Prostate gland (tissue), 2 donors: ENCODE measurements at regions of chr22 and their contacts with region 1.

Region 1: GRCh38 chr22:42662114-42663021 is 13.2 kb upstream of the CYB5R3 start:
- DNase-seq: peak; percentile 79
- H3K4me3 ChIP-seq: peak overlapping the region; percentile 34 to 42
- H3K27ac ChIP-seq: peak overlapping the region; percentile 52 to 71
- H3K4me1 ChIP-seq: no peaks in the 10 kb centered on the region
- H3K27me3 ChIP-seq: no peaks in the 10 kb centered on the region
- CTCF ChIP-seq: peak; percentile 80 to 91 (median 84)
- POLR2A ChIP-seq: no peak

Region 2: GRCh38 chr22:42562238-42562665 is 100.1 kb before region 1 on chr22:
- intact Hi-C with region 1: no loop called
- DNase-seq: no peak
- H3K4me3 ChIP-seq: no peak overlapping the region
- H3K27ac ChIP-seq: no peak overlapping the region
- H3K4me1 ChIP-seq: no peaks in the 10 kb centered on the region
- H3K27me3 ChIP-seq: no peaks in the 10 kb centered on the region
- CTCF ChIP-seq: no peak
- POLR2A ChIP-seq: no peak

Region 3: GRCh38 chr22:42717197-42717928 is 55.0 kb after region 1 on chr22:
- intact Hi-C with region 1: loop called (anchors 5 kb)
- DNase-seq: no peak
- H3K4me3 ChIP-seq: no peak overlapping the region
- H3K27ac ChIP-seq: peak overlapping the region; percentile 31 to 36
- H3K4me1 ChIP-seq: peaks cover 7% of the 10 kb centered on the region
- H3K27me3 ChIP-seq: no peaks in the 10 kb centered on the region
- CTCF ChIP-seq: no peak
- POLR2A ChIP-seq: no peak

Region 4: DNA sequence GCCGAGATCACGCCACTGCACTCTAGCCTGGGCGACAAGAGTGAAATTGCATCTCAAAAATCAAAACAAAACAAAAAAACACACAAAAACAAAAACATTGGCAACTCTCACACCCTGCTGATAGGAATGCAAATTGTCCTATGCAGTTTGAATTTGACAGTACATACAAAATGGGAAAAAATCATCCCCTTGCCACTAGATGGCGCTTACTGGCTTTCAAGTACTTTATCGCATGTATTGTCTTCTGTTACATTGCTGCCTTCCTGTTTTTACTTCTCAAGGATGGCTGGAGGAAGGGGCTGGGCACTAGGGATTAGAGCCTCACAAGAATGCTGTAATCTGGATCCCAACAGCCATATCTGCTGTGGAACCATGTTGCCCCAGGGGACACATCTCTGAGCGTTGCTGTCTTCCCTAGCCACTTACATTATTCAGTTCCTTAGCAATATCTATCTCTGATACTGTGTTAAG is 117.7 kb after region 1 on chr22:
- intact Hi-C with region 1: loop called (anchors 10 kb)
- DNase-seq: peak; percentile 94
- H3K4me3 ChIP-seq: no peak overlapping the region
- H3K27ac ChIP-seq: peak overlapping the region in 1 of 2 donors; percentile 49
- H3K4me1 ChIP-seq: no peaks in the 10 kb centered on the region
- H3K27me3 ChIP-seq: no peaks in the 10 kb centered on the region
- CTCF ChIP-seq: peak; percentile 71 to 98 (median 92)
- POLR2A ChIP-seq: no peak

Region 5: DNA sequence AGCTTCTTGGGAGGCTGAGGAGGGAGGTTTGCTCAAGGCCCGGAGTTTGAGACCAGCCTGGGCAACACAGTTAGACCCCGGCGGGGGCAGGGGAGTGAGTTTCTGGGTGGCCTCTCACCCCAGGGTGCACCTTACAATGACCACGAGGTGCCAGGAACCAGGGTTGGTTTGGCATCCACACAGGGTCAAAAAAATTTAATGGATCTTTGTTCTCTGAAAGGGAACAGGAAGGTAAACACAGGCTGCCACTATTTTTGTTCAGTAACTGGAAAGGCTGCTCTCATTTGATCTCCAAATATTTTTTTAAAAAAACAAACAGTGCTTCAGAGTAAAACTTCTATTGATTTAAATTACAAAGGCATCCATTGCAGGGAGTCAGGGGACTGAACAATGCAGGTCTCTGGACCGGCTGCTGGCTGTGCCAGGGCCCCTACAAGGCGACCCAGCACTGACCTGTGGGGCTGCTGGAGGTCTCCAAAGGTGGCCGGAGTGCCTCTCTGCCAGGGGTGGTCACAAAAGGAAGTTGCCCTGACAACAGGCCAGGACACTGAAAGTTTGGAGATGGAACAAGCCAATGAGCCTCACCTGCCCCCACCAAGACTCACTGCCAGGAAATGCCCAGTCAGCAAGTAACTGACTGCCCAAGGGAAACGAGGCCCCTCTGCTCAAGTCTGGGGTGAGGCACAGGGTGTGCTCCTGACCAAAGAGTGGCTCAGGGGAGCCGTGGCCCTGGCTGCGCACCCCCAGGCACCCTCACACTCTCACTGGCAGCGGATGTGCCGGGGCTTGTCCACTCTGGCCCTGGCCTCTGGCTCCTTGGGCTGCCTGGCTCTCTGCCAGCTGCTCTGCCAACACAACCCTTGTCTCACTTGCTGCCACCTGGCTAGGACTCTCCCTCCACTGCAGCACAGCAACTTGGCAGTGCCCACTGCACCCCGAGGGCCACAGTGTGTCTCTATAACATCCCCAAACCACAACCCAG is 142.9 kb after region 1 on chr22:
- intact Hi-C with region 1: loop called (anchors 5 kb)
- DNase-seq: peak; percentile 89
- H3K4me3 ChIP-seq: no peak overlapping the region
- H3K27ac ChIP-seq: peak overlapping the region; percentile 94 to 95
- H3K4me1 ChIP-seq: peaks cover 33% of the 10 kb centered on the region
- H3K27me3 ChIP-seq: no peaks in the 10 kb centered on the region
- CTCF ChIP-seq: peak in 1 of 4 experiments; percentile 7
- POLR2A ChIP-seq: no peak